ENCODE measurements at regions of chr12 and their contacts with region 1.

Region 1: DNA sequence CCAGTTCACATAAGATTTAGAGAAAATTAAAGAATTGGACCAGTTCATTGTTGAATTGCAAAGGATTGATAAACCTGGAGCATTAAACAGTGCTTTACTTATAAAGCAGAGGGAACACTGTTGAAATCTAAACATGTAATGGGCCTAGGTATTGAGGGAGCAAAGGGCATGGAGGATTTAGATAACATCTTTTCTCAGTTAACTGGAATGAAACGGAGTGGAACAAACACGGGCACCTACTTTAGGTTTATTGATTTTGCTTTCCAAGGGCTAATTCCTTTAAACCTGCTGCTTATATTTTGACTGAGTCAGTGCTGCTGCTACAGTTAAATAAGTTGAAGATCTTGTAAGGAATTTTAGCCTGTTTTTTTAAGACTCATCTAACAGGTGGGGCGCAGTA is 5.6 kb downstream of the EIF4B start:
- DNase-seq: no peak
- ATAC-seq: no peak
- H3K4me3 ChIP-seq: no peak overlapping the region
- H3K27ac ChIP-seq: 0 out of 2 replicates have a peak overlapping the region, but pooled peaks have one; percentile 35
- H3K4me1 ChIP-seq: peaks cover 28% of the 10 kb centered on the region
- H3K27me3 ChIP-seq: no peaks in the 10 kb centered on the region
- CTCF ChIP-seq: no peak

Region 2: GRCh38 chr12:53047221-53048042 is 35.5 kb after region 1 on chr12:
- CTCF ChIA-PET with region 1: no interaction called
- POLR2A ChIA-PET with region 1: interaction called, 11 read pairs
- in situ Hi-C with region 1: no loop called
- intact Hi-C with region 1: no loop called
- DNase-seq: no peak
- ATAC-seq: peak; percentile 64
- H3K4me3 ChIP-seq: peak overlapping the region; percentile 48 to 71
- H3K27ac ChIP-seq: peak overlapping the region; percentile 93
- H3K4me1 ChIP-seq: peaks cover 77% of the 10 kb centered on the region
- H3K27me3 ChIP-seq: no peaks in the 10 kb centered on the region
- CTCF ChIP-seq: peak; percentile 88